H1 (cell line): ENCODE measurements at regions of chr10 and their contacts with region 1.

Region 1: GRCh38 chr10:14325325-14325955 is 5.3 kb downstream of the FRMD4A start:
- DNase-seq: peak; percentile 39 to 89
- H3K4me3 ChIP-seq: no peak overlapping the region
- H3K27ac ChIP-seq: no peak overlapping the region
- H3K4me1 ChIP-seq: peaks cover 12 to 15% (median 14%) of the 10 kb centered on the region in 4 experiments
- H3K27me3 ChIP-seq: no peaks in the 10 kb centered on the region
- CTCF ChIP-seq: peak in 2 of 3 experiments; percentile 61 to 84; a peak in 3 of 4 replicates
- EP300 ChIP-seq: no peak
- POLR2A ChIP-seq: no peak
- RAD21 ChIP-seq: peak; percentile 52 to 72

Region 2: DNA sequence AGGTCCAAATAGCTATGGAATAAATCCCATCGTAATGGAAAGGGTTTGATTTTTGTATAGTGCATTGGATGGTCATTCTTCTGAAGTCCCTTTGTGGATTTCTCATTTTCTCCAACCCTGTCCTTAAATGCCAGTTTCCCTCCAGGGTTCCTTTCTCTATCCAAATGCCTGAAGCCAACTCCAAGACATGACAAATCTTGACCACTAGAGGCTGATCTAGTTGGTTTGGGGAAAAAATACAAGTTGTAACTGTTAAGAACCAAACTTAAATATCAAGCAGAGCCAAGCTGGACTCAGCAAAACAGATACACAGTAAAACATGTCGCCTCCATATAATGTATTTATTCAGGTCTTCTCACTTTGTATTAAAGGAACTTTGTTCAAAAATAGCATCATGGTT is 23.4 kb before region 1 on chr10:
- CTCF ChIA-PET with region 1: interaction called, 18 read pairs
- POLR2A ChIA-PET with region 1: no interaction called
- DNase-seq: no peak
- H3K4me3 ChIP-seq: no peak overlapping the region
- H3K27ac ChIP-seq: no peak overlapping the region
- H3K4me1 ChIP-seq: peaks cover 0 to 2% (median 0%) of the 10 kb centered on the region in 4 experiments; a peak in 1 of 7 replicates
- H3K27me3 ChIP-seq: peaks cover 0 to 1% (median 0%) of the 10 kb centered on the region in 4 experiments; a peak in 1 of 7 replicates
- CTCF ChIP-seq: peak in 2 of 3 experiments; percentile 52 to 71; a peak in 3 of 4 replicates
- EP300 ChIP-seq: no peak
- POLR2A ChIP-seq: no peak
- RAD21 ChIP-seq: peak; percentile 52 to 63

Region 3: GRCh38 chr10:14312014-14312413 is 13.4 kb before region 1 on chr10:
- CTCF ChIA-PET with region 1: interaction called, 11 read pairs
- POLR2A ChIA-PET with region 1: interaction called, 4 read pairs
- DNase-seq: no peak
- H3K4me3 ChIP-seq: no peak overlapping the region
- H3K27ac ChIP-seq: no peak overlapping the region
- H3K4me1 ChIP-seq: peaks cover 0 to 2% (median 0%) of the 10 kb centered on the region in 4 experiments; a peak in 1 of 7 replicates
- H3K27me3 ChIP-seq: no peaks in the 10 kb centered on the region
- CTCF ChIP-seq: no peak
- EP300 ChIP-seq: no peak
- POLR2A ChIP-seq: no peak
- RAD21 ChIP-seq: no peak

Region 4: DNA sequence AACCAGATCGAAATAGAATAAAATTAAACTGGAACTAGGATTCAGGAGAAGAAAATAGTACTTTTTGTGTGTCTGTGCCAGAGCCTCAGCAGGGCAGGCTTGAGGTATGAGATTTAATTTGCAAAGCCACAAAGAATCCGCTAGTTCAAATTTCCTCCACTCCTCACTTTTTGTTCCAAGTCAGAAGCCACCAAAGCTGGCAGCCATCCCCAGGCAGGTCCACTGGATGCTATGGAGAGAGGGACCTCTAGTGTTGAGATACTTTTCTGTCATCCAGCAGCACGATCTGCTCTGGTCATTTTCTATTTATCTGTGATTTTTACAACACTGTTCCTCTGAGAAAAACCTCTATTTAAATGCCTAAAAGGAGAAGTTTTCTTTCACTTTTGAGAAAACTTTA is 153.2 kb after region 1 on chr10:
- CTCF ChIA-PET with region 1: interaction called, 11 read pairs
- POLR2A ChIA-PET with region 1: interaction called, 3 read pairs
- DNase-seq: peak in 1 of 2 experiments; percentile 46
- H3K4me3 ChIP-seq: no peak overlapping the region
- H3K27ac ChIP-seq: no peak overlapping the region
- H3K4me1 ChIP-seq: no peaks in the 10 kb centered on the region
- H3K27me3 ChIP-seq: no peaks in the 10 kb centered on the region
- CTCF ChIP-seq: peak; percentile 56 to 82 (median 75)
- EP300 ChIP-seq: no peak
- POLR2A ChIP-seq: no peak
- RAD21 ChIP-seq: peak; percentile 97 to 98